Activated T-helper 1 cell treated with anti-CD3 and anti-CD28 coated beads, Interleukin-12 subunit alpha, Interleukin-12 subunit beta, Interleukin-2, Interleukin-4 antibody, amounts not matched to agents 30 ng/mL and 10 ng/mL and 1 ng/mL, durations not matched to agents 14 hours and 24 hours and 36 hours (primary cell): ENCODE measurements at regions of chr1 and their contacts with region 1.

Region 1: GRCh38 chr1:33181921-33182341 is at the start of gene TRIM62:
- DNase-seq: peak; percentile 69
- H3K4me3 Mint-ChIP-seq: peak within 1 kb of the TSS; percentile 87
- H3K27ac Mint-ChIP-seq: peak within 1 kb of the TSS; percentile 81
- H3K4me1 Mint-ChIP-seq: peaks cover 28% of the 10 kb centered on the region
- H3K27me3 Mint-ChIP-seq: peaks cover 19% of the 10 kb centered on the region
- total RNA-seq, gene TRIM62: 4.1 and 4.5 TPM in 2 replicates

Region 2: DNA sequence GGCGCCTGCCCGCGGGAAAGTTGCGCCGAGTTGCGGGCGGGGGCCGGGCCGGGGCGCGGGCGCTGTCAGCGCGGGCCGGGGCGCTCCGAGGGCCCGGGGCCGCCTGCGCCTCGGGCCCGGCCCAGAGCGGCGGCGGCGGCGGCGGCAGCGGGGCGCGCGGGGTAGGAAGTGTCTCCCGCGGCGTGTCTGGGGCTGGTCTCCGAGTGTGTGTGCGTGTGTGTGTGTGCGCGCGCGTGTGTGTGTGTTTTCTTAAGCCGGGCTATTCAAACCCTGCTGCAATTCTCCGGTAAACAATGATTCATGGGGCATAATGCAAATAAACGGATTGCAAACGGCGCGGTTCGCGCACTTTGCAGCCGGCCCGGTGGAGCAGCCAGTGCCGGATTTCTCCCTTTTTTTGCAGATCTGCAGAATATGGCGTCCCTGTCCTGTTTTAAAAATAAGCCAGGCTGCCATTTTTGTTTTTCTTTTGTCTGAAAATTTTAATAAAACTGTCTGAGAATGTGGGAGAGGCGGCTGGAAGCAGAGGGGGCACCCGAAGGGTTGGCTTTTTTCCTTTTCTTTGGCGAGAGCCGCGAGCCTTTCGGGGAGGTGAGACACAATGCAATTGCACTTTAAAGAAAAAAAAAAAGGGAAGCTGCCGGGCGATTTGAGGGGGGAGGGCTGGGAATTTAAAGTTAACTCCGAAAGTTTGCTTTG is 74.9 kb after region 1 on chr1:
- intact Hi-C with region 1: loop called (anchors 5 kb)
- DNase-seq: peak; percentile 41
- H3K4me3 Mint-ChIP-seq: peak overlapping the region; percentile 92
- H3K27ac Mint-ChIP-seq: peak overlapping the region; percentile 98
- H3K4me1 Mint-ChIP-seq: peaks cover 34% of the 10 kb centered on the region
- H3K27me3 Mint-ChIP-seq: peaks cover 11% of the 10 kb centered on the region

Region 3: DNA sequence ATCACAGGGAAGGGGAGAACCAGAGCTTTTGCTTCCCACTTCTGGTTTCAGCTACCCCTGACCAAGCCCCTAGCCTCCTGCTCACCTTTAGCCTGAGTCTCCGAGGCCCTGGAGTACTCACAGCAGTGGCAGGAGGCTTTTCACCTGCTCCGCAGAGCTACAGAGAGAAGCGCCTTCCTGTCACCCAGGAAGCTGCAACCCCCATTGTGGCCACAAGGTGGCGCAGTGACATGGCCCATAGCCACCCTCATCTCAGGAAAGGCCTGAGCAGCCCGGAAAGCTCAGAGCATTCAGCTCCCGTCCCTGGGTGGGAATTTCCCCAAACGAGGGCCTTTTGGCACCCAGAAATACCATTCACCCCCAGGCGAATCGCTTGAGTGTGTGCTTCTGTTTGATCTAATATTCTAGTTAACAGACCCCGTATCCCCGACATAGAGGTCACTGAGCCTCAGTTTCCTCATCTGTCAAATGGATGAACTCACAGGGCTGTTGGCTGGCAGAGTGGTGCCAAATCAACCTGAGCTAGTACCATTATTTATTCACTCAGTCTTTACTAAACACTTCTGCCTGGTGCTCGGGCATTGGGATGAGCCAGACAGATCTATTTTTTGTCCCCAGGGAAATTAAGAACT is 113.6 kb after region 1 on chr1:
- intact Hi-C with region 1: no loop called
- DNase-seq: peak; percentile 79
- H3K4me3 Mint-ChIP-seq: no peak overlapping the region
- H3K27ac Mint-ChIP-seq: no peak overlapping the region
- H3K4me1 Mint-ChIP-seq: peaks cover 8% of the 10 kb centered on the region
- H3K27me3 Mint-ChIP-seq: no peaks in the 10 kb centered on the region